PC-3 (cell line): ENCODE measurements at regions of chr2 and their contacts with region 1.

Region 1: DNA sequence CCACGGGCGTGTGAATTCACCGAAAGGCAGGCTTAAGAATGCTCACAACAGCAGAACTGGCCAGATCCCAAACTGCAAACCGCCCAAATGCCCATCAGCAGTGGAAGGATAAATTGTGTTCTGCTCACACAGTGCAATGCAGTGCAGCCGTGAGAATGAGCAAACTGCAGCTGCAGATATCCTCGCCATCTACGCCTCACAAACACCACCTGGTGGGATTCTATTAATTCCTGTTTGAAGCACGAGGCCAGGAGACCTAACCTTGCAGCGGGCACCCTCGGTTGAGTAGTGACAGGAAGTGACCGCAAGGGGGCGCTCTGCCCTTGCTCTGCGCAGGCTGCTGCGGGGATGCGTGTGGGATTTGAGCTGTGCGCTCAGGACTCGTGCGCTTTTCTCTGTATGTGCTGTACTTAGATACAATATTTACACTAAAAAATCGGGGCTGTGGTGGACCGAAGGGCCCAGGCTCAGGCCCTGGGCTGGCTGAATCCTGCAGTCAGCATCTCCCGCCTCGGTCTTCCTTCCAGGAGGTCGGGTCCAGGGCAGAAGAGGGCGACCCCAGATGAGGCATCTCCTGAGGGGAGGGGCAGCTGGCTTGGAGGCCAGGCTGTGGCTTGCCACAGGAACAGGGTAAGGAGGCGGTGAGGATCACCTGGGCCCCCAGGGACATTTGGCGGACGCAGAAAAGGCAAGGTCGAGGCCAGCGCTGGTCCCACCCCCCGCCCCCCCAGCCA is 19.8 kb upstream of the PDIA6 start:
- DNase-seq: peak; percentile 92
- ATAC-seq: peak; percentile 80
- H3K4me3 ChIP-seq: no peak overlapping the region
- H3K27ac ChIP-seq: no peak overlapping the region
- H3K4me1 ChIP-seq: peaks cover 14% of the 10 kb centered on the region; the same call in 1 of the 2 replicates
- H3K27me3 ChIP-seq: peaks cover 6% of the 10 kb centered on the region; the same call in 1 of the 2 replicates
- CTCF ChIP-seq: peak; percentile 97

Region 2: GRCh38 chr2:10868465-10869314 is 36.3 kb after region 1 on chr2:
- CTCF ChIA-PET with region 1: interaction called, 16 read pairs
- POLR2A ChIA-PET with region 1: no interaction called
- intact Hi-C with region 1: no loop called
- DNase-seq: peak; percentile 78
- ATAC-seq: peak; percentile 83
- H3K4me3 ChIP-seq: no peak overlapping the region
- H3K27ac ChIP-seq: no peak overlapping the region
- H3K4me1 ChIP-seq: peaks cover 19% of the 10 kb centered on the region
- H3K27me3 ChIP-seq: no peaks in the 10 kb centered on the region
- CTCF ChIP-seq: no peak

Region 3: GRCh38 chr2:10900216-10901109 is 68.1 kb after region 1 on chr2:
- CTCF ChIA-PET with region 1: interaction called, 11 read pairs
- POLR2A ChIA-PET with region 1: no interaction called
- intact Hi-C with region 1: loop called (anchors 1 kb)
- DNase-seq: peak; percentile 74
- ATAC-seq: peak; percentile 83
- H3K4me3 ChIP-seq: no peak overlapping the region
- H3K27ac ChIP-seq: peak overlapping the region; percentile 3; the same call in 1 of the 2 replicates
- H3K4me1 ChIP-seq: peaks cover 15% of the 10 kb centered on the region
- H3K27me3 ChIP-seq: no peaks in the 10 kb centered on the region
- CTCF ChIP-seq: peak; percentile 72

Region 4: DNA sequence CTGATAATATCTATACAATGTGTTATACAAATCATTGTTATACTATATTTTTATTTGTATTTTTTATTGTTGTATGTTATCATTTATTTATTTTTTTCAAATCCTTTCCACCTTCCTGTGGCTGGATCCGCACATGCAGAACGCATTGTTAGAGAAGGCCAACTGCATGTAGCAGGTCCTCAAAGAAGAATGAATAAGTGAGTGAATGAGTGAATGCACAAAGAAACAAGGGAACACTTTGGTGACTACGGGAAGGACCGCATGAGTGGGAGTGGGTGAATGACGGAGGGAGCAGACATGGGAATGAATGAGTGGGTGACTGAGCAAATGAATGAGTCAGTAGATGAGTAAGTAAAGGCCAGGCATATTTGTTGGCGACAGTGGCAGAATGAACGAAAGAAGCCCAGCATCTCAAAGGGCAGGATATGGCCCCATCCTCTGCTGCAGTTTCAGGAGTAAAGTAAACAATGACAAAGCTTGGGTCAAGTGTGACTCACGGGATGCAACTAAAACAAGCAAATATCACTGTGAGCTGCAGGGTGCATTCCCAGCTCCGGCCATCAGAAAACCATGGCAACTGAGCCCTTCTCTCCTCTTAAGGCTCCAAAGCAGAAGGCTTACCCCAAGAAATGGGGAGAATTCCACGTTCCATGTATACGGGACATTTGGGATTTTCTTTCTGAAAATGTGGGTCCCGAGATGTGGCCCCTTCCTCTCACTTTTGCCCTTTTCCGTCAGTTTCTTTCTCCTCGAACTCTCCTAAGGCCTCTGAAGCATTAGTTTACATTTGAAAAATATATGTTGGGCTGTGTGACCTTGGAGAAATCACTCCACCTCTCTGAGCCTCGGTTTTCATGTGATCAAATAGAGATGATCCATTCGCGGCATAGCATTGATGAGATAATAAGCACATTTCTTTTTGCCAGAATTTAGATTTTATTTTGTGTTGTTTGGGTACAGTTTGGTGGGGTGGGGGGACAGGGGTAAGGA is 103.9 kb after region 1 on chr2:
- CTCF ChIA-PET with region 1: interaction called, 4 read pairs
- POLR2A ChIA-PET with region 1: no interaction called
- intact Hi-C with region 1: loop called (anchors 1 kb)
- DNase-seq: peak; percentile 98
- ATAC-seq: peak; percentile 84
- H3K4me3 ChIP-seq: no peak overlapping the region
- H3K27ac ChIP-seq: peak overlapping the region; percentile 99
- H3K4me1 ChIP-seq: peaks cover 45% of the 10 kb centered on the region
- H3K27me3 ChIP-seq: no peaks in the 10 kb centered on the region
- CTCF ChIP-seq: no peak

Region 5: DNA sequence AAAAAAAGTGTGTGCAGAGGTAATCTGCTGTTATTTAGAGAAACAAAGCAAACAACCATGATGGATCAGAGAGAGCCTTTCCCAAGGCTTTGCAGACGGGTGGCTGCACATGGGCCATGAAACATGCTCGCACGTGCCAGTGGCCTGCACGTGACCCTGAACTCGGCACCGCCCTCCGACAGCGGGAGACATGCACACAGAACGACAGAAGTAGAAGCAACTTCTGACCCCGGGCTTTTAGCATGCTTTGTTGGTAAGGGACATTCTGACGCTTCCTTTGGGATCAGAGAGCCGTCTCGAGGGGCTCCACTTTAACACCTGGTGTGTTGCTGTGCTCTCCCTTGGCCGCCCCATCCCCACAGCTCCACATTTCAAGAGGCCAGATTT is 191.9 kb after region 1 on chr2:
- CTCF ChIA-PET with region 1: no interaction called
- POLR2A ChIA-PET with region 1: no interaction called
- intact Hi-C with region 1: loop called (anchors 2 kb)
- DNase-seq: no peak
- ATAC-seq: no peak
- H3K4me3 ChIP-seq: no peak overlapping the region
- H3K27ac ChIP-seq: no peak overlapping the region
- H3K4me1 ChIP-seq: no peaks in the 10 kb centered on the region; the same call in 1 of the 2 replicates
- H3K27me3 ChIP-seq: 0 out of 2 replicates have a peak, but pooled peaks cover 4% of the 10 kb centered on the region
- CTCF ChIP-seq: no peak

Region 6: DNA sequence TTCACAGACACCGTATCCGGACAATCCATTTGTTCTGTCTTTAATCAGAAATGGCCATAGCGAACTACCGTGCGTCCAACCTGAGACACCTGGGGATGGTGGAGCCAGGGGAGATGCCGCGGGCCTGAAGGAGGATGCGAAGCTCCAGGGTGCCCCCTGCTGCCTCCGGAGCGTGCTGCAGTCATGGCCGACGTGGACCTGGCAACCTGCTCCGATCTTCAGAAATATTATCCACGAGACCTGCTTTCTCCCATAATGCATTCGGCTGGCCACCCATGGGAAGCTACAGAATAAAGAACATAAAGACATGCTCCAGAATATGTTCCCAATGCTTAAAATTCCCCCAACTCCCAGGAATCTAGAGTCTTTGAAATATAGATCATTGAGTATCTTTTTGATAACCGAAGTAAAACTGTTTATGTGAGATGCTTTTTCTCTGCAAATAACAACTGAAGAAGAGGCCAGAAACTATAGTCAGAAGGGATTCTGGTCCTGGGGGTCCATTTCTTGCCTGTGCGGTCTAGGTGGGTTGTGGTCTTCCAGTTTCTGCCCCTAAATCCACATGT is 292.2 kb after region 1 on chr2:
- CTCF ChIA-PET with region 1: interaction called, 19 read pairs
- POLR2A ChIA-PET with region 1: no interaction called
- intact Hi-C with region 1: loop called (anchors 1 kb)
- DNase-seq: peak; percentile 85
- ATAC-seq: peak; percentile 81
- H3K4me3 ChIP-seq: no peak overlapping the region
- H3K27ac ChIP-seq: no peak overlapping the region
- H3K4me1 ChIP-seq: peaks cover 12% of the 10 kb centered on the region
- H3K27me3 ChIP-seq: no peaks in the 10 kb centered on the region
- CTCF ChIP-seq: peak; percentile 95

Region 7: GRCh38 chr2:11224887-11225286 is 392.5 kb after region 1 on chr2:
- CTCF ChIA-PET with region 1: no interaction called
- POLR2A ChIA-PET with region 1: no interaction called
- intact Hi-C with region 1: no loop called
- DNase-seq: no peak
- ATAC-seq: no peak
- H3K4me3 ChIP-seq: no peak overlapping the region
- H3K27ac ChIP-seq: no peak overlapping the region
- H3K4me1 ChIP-seq: no peaks in the 10 kb centered on the region
- H3K27me3 ChIP-seq: no peaks in the 10 kb centered on the region
- CTCF ChIP-seq: no peak

Region 8: DNA sequence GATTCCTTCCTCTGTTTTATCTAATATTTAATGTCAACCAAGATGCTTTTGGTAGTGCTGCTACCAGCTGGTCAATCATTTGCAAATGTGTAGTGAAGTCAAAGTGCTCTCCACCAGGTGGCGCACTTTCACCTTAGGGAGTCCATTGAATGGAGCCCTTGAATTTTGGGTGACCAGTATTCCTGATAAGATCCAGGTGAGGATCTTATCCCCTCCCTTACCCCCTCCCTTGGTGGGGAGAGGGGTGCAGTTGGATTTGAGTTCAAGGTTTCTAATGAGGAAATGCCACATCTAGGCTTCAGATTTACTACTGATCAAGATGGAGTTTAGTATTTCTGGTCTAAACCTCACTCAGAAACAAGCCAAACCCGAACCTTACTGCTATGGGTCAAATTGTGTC is 645.6 kb after region 1 on chr2:
- CTCF ChIA-PET with region 1: no interaction called
- POLR2A ChIA-PET with region 1: no interaction called
- intact Hi-C with region 1: no loop called
- DNase-seq: peak; percentile 93
- ATAC-seq: peak; percentile 86
- H3K4me3 ChIP-seq: no peak overlapping the region
- H3K27ac ChIP-seq: no peak overlapping the region
- H3K4me1 ChIP-seq: no peaks in the 10 kb centered on the region
- H3K27me3 ChIP-seq: no peaks in the 10 kb centered on the region
- CTCF ChIP-seq: peak; percentile 95